ENCODE measurements at regions of chr3 and their contacts with region 1.

Region 1: DNA sequence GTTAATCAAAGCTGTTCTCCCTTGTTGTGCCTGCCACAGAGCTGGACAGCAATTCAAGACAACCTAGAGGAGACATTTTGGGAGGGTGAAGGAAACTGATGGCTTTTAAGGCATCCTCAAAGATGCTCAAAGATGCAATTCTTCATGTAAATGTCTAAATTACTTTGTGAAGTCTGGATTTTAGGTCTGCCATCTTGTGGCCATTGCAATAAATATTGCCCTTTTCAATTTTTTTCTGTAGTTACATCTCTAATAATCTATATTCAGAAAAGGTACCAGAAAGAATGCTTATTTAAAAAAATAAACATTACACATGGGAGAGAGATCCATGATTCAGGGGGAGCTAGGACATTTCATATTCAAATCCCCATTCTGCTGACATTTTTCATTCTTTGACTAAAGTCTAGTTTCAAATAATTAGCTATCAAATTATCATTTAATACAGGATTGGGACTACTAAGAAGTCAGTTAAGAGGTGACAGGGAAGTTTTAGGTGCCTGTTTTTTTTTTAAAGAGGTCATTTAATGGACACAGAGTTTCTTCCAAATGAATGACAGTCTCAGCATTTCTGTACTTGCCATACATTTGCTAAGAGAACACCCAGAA is 259.8 kb upstream of the WNT5A start:
- DNase-seq: peak; percentile 6
- H3K4me3 ChIP-seq: no peak overlapping the region
- H3K27ac ChIP-seq: no peak overlapping the region
- H3K4me1 ChIP-seq: no peaks in the 10 kb centered on the region
- H3K27me3 ChIP-seq: no peaks in the 10 kb centered on the region
- CTCF ChIP-seq: peak in 1 of 2 donors; percentile 4
- POLR2A ChIP-seq: no peak

Region 2: DNA sequence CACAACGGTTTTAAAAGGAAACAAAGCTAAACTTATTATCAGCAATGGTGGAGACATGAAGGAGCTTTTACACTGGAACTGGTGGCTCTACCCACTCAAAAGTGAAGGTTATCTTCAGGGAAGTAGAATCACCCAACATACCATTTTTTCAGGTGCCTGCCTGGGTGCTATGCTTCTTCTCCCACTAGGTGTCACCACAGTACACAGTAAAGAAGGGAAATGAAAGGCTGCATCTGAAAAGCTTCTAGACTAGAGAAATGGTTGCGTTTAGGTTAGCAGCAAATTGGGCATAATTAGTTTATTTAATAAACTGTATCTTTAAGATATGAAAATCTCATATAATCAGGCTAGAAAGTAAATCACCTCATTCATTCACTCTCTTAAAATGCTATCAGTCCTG is 1808.3 kb before region 1 on chr3:
- CTCF ChIA-PET with region 1: interaction called, 14 read pairs
- POLR2A ChIA-PET with region 1: no interaction called
- dilution Hi-C with region 1: no loop called
- intact Hi-C with region 1: no loop called
- DNase-seq: peak; percentile 39
- H3K4me3 ChIP-seq: no peak overlapping the region
- H3K27ac ChIP-seq: no peak overlapping the region
- H3K4me1 ChIP-seq: no peaks in the 10 kb centered on the region
- H3K27me3 ChIP-seq: no peaks in the 10 kb centered on the region
- CTCF ChIP-seq: peak; percentile 51 to 52
- POLR2A ChIP-seq: no peak